ENCODE measurements at regions of chr12 and their contacts with region 1.

Region 1: GRCh38 chr12:101773650-101774162 is 34.4 kb upstream of the SYCP3 start:
- DNase-seq: peak; percentile 70
- H3K4me3 Mint-ChIP-seq: no peak overlapping the region
- H3K27ac Mint-ChIP-seq: no peak overlapping the region
- H3K4me1 Mint-ChIP-seq: peaks cover 7% of the 10 kb centered on the region
- H3K27me3 Mint-ChIP-seq: no peaks in the 10 kb centered on the region
- CTCF ChIP-seq: peak; percentile 88

Region 2: GRCh38 chr12:100987552-100988521 is 785.9 kb before region 1 on chr12:
- CTCF ChIA-PET with region 1: no interaction called
- intact Hi-C with region 1: no loop called
- DNase-seq: peak; percentile 72
- H3K4me3 Mint-ChIP-seq: no peak overlapping the region
- H3K27ac Mint-ChIP-seq: peak overlapping the region; percentile 12
- H3K4me1 Mint-ChIP-seq: peaks cover 10% of the 10 kb centered on the region
- H3K27me3 Mint-ChIP-seq: no peaks in the 10 kb centered on the region
- CTCF ChIP-seq: peak; percentile 22

Region 3: DNA sequence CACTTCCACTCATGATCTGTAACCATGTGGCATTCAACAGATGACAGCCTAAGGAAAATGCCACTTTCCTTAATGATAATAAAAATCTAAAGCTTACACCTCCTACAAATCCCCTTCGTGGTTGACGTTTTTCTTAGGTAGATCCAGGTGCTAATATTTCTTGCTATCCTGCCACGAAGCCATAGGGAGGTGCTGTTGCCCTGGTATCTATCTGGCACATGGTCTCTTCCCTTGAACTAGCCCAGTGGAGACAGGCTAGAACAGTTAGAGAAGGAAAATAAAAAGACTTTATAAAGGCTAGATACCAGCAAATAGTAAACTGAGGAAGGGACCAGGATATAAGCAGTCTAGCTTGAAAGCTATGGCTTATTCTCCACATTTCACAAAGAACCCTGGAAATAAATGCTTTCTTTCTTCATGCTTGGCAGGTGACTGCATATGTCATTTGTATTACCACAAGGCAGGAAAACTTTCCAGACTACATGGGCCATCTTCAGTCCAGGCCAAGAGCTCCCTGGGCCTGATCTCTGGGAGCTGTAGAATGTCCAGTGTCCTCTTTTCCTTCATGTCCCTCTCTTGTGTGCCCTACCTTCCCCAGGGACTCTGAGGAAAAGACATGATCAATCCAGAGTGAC is 283.3 kb before region 1 on chr12:
- CTCF ChIA-PET with region 1: no interaction called
- intact Hi-C with region 1: loop called (anchors 2 kb)
- DNase-seq: peak; percentile 60
- H3K4me3 Mint-ChIP-seq: no peak overlapping the region
- H3K27ac Mint-ChIP-seq: no peak overlapping the region
- H3K4me1 Mint-ChIP-seq: no peaks in the 10 kb centered on the region
- H3K27me3 Mint-ChIP-seq: peaks cover 16% of the 10 kb centered on the region
- CTCF ChIP-seq: peak; percentile 34

Region 4: DNA sequence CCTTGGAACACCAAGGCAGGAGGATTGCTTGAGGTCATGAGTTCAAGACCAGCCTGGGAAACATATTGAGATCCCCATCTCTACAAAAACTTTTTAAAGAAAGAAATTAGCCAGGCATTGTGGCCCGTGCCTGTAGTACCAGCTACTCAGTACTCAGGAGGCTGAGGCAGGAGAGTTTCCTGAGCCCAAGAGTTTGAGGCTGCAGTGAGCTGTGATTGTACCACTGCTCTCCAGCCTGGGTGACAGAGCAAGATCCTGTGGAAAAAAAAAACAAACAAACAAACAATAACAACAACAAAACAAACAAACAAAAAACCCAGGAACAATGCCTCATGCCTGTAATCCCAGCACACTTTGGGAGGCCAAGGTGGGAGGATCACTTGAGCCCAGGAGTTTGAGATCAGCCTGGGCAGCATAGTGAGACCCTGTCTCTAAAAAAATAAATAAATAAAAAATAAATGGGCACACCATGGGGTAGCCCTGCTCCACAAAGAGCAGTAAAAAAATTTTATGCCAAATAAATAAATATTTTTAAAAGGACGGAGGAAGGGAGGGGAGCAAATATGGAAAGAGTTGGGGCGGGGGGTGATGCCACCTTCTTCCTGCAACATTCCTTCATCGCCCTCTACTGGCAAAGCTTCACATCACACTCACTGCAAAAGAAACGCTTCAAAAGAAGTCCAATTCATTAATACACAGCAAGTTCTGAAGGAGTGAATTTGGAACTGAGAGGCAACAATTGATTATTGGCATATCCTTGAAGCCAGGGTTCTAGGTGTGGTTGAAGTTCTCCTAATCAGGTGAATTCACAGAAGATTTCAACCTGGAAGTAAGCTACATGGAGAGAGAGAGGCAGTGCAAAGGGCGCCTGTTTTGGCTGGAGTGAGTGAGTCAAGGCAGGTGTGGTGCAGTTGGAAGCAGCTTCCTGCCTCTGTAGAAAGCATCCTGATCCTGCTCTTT is 65.9 kb after region 1 on chr12:
- CTCF ChIA-PET with region 1: interaction called, 14 read pairs
- intact Hi-C with region 1: loop called (anchors 2 kb)
- DNase-seq: peak; percentile 74
- H3K4me3 Mint-ChIP-seq: no peak overlapping the region
- H3K27ac Mint-ChIP-seq: no peak overlapping the region
- H3K4me1 Mint-ChIP-seq: no peaks in the 10 kb centered on the region
- H3K27me3 Mint-ChIP-seq: no peaks in the 10 kb centered on the region
- CTCF ChIP-seq: peak; percentile 86

Region 5: DNA sequence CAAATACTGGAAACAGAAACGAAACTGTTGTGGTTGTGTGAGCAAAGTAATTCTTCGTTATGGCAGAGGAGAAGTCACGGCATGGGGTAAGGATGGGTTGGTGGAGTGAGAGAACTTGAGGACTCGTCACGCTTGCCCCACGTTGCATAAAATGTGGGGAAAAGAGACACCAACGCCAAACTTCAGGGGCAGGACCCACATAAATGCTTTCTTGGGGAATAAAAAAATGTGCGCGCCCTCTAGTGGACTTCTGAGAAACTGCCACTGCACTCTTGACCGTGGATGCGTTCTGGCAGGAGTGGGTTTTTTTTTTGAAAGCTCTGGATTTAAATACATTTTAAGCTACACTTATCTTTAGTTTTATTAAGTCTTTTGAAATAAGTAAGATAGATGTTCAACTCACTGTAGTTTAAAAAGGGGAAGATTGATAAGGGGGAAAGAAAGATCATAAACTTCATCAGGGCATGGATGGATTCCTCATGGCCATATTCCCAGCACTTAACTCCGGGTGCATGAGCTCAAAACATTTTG is 710.8 kb after region 1 on chr12:
- CTCF ChIA-PET with region 1: no interaction called
- intact Hi-C with region 1: loop called (anchors 10 kb)
- DNase-seq: peak; percentile 51
- H3K4me3 Mint-ChIP-seq: peak overlapping the region; percentile 47
- H3K27ac Mint-ChIP-seq: no peak overlapping the region
- H3K4me1 Mint-ChIP-seq: no peaks in the 10 kb centered on the region
- H3K27me3 Mint-ChIP-seq: no peaks in the 10 kb centered on the region
- CTCF ChIP-seq: peak; percentile 92

Region 6: DNA sequence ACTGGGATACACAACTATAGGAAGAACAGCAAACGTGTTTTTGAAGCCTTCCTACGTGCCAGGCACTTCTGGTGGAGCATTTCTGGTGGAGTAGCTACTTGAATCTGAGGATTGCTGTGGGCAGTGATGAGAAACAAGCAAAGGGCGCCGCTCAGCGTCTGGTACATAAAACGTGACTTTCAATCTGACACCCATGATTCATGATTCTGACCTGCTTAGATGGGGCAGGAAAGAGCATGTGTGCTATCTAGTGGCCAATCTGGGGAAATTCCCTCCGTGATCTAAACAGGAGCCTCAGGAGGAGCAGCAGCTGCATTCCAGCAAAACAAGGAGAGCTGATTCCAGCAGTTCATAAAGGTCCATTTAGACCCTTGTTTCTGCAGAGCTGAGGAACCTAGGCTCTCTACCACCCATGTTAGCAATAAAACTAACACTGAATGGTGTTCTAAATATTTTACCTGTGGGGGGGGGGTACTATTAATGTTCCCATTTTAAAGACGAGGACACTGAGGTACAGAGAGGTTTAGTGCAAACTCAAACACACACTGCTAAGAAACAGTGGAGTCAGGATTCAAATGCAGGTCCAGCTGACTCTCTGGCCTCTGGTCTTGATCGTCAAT is 1105.5 kb after region 1 on chr12:
- CTCF ChIA-PET with region 1: no interaction called
- intact Hi-C with region 1: loop called (anchors 10 kb)
- DNase-seq: peak; percentile 65
- H3K4me3 Mint-ChIP-seq: no peak overlapping the region
- H3K27ac Mint-ChIP-seq: no peak overlapping the region
- H3K4me1 Mint-ChIP-seq: peaks cover 12% of the 10 kb centered on the region
- H3K27me3 Mint-ChIP-seq: no peaks in the 10 kb centered on the region
- CTCF ChIP-seq: peak; percentile 60